Stomach (tissue), 19 donors: ENCODE measurements at regions of chr21 and their contacts with region 1.

Region 1: DNA sequence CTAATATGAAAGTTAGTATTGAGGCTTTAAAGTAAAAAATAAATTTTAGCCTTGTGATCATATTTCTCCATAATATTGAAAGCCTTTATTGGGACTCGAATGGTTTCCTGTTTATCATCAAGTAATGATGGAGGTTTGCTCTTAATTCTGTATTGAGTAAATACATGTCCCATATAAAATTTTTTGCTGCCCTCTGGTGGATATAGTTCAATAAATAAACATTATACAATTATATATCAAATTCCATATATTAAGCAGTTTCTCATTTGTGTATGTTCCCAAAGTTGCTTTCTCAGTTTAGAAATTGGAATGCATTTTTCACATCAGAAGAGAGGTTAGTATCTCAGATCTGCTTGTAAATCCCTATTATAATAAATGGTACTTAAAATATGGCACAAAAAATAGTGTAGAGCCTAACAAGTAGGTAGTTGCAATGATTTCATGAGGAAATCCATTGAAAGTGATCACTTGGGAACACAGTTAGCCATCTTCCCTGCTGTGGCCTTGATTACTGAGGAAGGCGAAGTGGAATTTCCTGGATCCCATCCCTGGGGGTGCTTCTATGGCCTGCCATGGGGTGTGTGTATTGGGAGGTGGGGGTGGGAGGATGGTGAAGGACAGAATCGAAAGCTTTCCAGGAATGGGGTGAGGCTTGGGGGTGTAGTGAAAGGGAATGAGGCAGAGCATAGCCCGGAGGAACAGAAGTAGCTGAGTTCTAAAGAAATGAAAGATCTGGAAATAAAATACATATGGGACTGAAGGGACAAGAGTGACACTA is 84.1 kb upstream of the C21orf91 start:
- DNase-seq: peak in 1 of 2 donors; percentile 45
- H3K4me3 ChIP-seq: no peak overlapping the region
- H3K27ac ChIP-seq: no peak overlapping the region
- H3K4me1 ChIP-seq: peaks cover 0 to 5% (median 0%) of the 10 kb centered on the region in 4 donors
- H3K27me3 ChIP-seq: no peaks in the 10 kb centered on the region
- CTCF ChIP-seq: peak in 2 of 7 experiments; percentile 6 to 14
- EP300 ChIP-seq: no peak
- POLR2A ChIP-seq: no peak

Region 2: DNA sequence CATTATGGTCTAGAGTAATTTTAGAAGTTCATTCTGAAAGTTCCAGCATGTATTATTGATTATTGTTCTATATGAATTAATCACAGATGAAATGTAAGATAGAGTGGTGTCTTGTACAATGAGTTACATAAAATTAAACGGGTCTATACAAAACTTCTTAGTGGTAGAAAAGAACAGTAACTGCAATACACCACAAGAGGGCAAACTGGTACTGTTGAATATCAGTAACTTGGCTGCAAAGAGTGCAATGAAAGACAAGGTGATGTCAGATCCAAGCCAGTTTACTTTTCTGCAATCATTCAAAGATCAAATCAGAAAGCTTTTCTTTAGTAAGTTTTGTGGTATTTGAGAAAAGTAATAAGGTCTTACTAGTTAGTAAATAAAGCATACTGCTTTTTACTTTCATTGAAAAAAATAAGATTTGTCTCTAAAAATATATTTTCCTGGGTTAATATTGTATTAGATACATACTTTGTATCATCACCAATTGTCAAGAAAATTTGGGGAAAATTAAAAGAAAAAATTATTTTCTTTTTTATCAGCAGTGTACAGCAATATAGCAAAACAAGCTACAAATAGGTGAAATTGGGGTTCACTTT is 224.1 kb before region 1 on chr21:
- intact Hi-C with region 1: loop called (anchors 5 kb)
- DNase-seq: peak in 1 of 2 donors; percentile 84
- H3K4me3 ChIP-seq: no peak overlapping the region
- H3K27ac ChIP-seq: no peak overlapping the region
- H3K4me1 ChIP-seq: no peaks in the 10 kb centered on the region
- H3K27me3 ChIP-seq: no peaks in the 10 kb centered on the region
- CTCF ChIP-seq: peak in 5 of 7 experiments; percentile 66 to 89 (median 79)
- EP300 ChIP-seq: no peak
- POLR2A ChIP-seq: no peak

Region 3: DNA sequence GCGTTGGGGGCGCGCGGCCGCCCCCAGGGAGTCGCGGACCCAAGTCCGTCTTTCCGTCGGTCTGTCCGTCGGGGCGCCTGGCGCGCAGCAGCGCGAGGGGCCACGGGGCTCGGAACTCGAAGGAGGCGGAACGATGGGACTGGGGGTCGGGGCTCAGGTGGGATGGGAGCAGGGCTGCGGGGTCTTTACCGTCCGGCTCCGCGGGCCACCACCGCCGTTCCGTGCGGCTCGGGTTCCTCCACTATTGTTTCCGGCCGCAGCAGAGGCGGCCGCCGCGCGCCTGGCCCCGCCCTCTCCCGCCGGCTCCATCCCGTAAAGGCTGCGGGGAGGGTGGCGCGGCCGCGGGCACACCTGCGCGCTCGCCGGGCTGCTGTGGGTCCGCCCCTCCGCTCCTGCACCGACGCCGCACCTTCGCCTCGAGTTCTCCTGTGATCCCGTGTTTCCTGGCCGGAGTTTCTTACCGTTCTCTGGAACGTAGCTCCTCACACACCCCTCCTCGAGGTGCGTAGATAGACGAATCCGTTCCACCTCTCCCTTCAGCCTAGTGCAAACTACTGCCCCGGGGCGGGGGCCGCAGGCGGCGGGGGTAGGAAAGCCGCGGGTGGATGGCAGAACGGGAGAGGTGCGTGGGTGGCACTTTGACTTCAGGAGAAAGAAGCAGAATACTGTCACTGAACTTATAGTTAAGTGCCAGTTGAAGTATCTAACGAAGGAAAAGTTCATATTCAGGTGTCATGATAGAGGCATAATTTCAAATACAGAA is 83.9 kb before region 1 on chr21 and contains the start of gene C21orf91:
- intact Hi-C with region 1: no loop called
- DNase-seq: peak; percentile 87 to 96
- H3K4me3 ChIP-seq: peak within 1 kb of the TSS; percentile 72 to 100 (median 97)
- H3K27ac ChIP-seq: peak within 1 kb of the TSS; percentile 88 to 98 (median 95)
- H3K4me1 ChIP-seq: peaks cover 9 to 39% (median 26%) of the 10 kb centered on the region in 4 donors
- H3K27me3 ChIP-seq: no peaks in the 10 kb centered on the region
- CTCF ChIP-seq: no peak
- EP300 ChIP-seq: no peak
- POLR2A ChIP-seq: peak in 1 of 4 donors; percentile 58
- total RNA-seq, gene C21orf91: under 0.01 to 50.9 (median 5.8) TPM